Mammary epithelial cell (primary cell): ENCODE measurements at regions of chr2 and their contacts with region 1.

Region 1: GRCh38 chr2:235666213-235666781 is 172.5 kb downstream of the AGAP1 start:
- DNase-seq: peak; percentile 92
- H3K4me3 ChIP-seq: peak overlapping the region; percentile 46 to 51 (median 50)
- H3K27ac ChIP-seq: peak overlapping the region; percentile 55
- H3K4me1 ChIP-seq: peaks cover 23% of the 10 kb centered on the region
- H3K27me3 ChIP-seq: no peaks in the 10 kb centered on the region
- CTCF ChIP-seq: no peak

Region 2: GRCh38 chr2:235493775-235494715 is 172.3 kb before region 1 on chr2 and contains the start of gene AGAP1:
- CTCF ChIA-PET with region 1: no interaction called
- dilution Hi-C with region 1: no loop called
- in situ Hi-C with region 1: no loop called
- intact Hi-C with region 1: loop called (anchors 10 kb)
- DNase-seq: peak; percentile 76
- H3K4me3 ChIP-seq: peak within 1 kb of the TSS; percentile 62 to 80 (median 67)
- H3K27ac ChIP-seq: peak within 1 kb of the TSS; percentile 46
- H3K4me1 ChIP-seq: peaks cover 14% of the 10 kb centered on the region
- H3K27me3 ChIP-seq: no peaks in the 10 kb centered on the region
- CTCF ChIP-seq: no peak
- total RNA-seq, gene AGAP1: 11.2 to 28.9 TPM

Region 3: GRCh38 chr2:235605312-235606003 is 60.8 kb before region 1 on chr2:
- CTCF ChIA-PET with region 1: no interaction called
- dilution Hi-C with region 1: no loop called
- in situ Hi-C with region 1: no loop called
- intact Hi-C with region 1: loop called (anchors 2 kb)
- DNase-seq: peak; percentile 87
- H3K4me3 ChIP-seq: no peak overlapping the region
- H3K27ac ChIP-seq: no peak overlapping the region
- H3K4me1 ChIP-seq: peaks cover 11% of the 10 kb centered on the region
- H3K27me3 ChIP-seq: no peaks in the 10 kb centered on the region
- CTCF ChIP-seq: no peak